Right lobe of liver (tissue), 6 donors: ENCODE measurements at regions of chr11 and their contacts with region 1.

Region 1: DNA sequence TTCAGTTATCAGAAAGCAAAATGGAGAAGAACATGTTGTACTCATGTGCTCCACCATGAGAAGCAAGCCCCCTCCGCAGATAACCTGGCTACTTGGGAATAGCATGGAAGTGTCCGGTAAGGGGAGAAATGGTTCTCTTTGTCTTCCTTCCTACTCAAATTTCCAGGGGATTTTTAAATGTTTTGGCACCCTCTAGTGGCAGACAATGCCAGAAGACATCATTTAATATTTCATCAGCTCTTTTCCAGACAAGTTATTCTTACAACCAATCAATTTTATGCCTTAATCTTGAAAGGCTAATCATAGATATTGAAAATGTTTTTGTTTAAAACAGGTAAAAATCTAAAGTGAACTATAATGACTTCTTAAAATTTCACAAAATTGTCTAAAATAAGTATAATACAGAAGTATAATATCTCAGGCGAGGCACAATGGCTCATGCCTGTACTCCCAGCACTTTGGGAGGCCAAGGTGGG is 15.7 kb downstream of the CRTAM start:
- DNase-seq: no peak
- ATAC-seq: peak; percentile 71 to 80 (median 74)
- H3K4me3 ChIP-seq: no peak overlapping the region
- H3K27ac ChIP-seq: no peak overlapping the region
- H3K4me1 ChIP-seq: no peaks in the 10 kb centered on the region
- H3K27me3 ChIP-seq: no peaks in the 10 kb centered on the region
- CTCF ChIP-seq: peak; percentile 66 to 74 (median 73)
- POLR2A ChIP-seq: no peak

Region 2: GRCh38 chr11:122516686-122517085 is 337.3 kb before region 1 on chr11:
- intact Hi-C with region 1: no loop called
- DNase-seq: no peak
- ATAC-seq: no peak
- H3K4me3 ChIP-seq: no peak overlapping the region
- H3K27ac ChIP-seq: no peak overlapping the region
- H3K4me1 ChIP-seq: no peaks in the 10 kb centered on the region
- H3K27me3 ChIP-seq: no peaks in the 10 kb centered on the region
- CTCF ChIP-seq: no peak
- POLR2A ChIP-seq: no peak

Region 3: GRCh38 chr11:122637541-122637940 is 216.5 kb before region 1 on chr11:
- intact Hi-C with region 1: loop called in 1 of 2 experiments (anchors 5 kb)
- DNase-seq: no peak
- ATAC-seq: no peak
- H3K4me3 ChIP-seq: no peak overlapping the region
- H3K27ac ChIP-seq: no peak overlapping the region
- H3K4me1 ChIP-seq: no peaks in the 10 kb centered on the region
- H3K27me3 ChIP-seq: no peaks in the 10 kb centered on the region
- CTCF ChIP-seq: no peak
- POLR2A ChIP-seq: no peak

Region 4: DNA sequence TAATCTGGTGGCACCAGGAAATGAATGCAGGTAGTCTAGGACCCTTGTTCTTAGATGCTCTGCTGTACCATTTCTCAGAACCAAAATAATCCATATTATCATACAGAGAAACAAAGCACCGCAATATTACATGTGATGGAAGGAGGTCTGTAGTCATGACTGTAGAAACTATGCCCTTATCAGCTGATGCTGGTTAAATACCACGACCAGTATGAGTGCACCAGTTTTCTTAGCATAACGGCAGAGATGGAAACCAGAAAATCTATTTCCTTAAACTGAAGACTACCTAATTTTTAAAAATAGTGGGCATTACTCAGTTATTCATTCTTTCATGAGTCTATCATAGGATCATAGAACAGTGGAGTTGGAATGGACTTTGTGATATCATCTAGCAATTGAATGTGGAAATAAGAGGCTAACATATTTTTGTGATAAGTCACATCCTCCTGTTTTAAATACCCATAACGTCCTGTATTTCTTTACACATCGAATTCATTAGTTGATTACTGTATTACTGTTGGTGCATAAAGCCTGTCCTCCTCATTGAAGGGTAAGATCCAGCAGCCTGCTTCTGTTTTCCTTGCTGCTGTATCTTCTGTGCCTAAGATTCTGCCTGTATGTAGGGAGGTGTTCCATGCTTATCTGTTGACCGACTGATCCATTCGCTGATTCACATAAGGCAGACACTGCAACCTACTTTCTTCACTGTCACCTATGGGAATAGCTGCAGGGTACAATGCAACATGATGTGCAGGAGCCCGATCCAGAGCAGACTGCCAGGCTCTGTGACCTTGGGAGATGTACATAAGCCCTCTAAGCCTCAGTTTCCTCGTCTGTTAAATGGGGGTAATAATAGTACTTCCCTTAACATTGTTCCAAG is 43.8 kb after region 1 on chr11:
- intact Hi-C with region 1: no loop called
- DNase-seq: no peak
- ATAC-seq: no peak
- H3K4me3 ChIP-seq: no peak overlapping the region
- H3K27ac ChIP-seq: no peak overlapping the region
- H3K4me1 ChIP-seq: no peaks in the 10 kb centered on the region
- H3K27me3 ChIP-seq: peaks cover 0 to 5% of the 10 kb centered on the region in 2 donors
- CTCF ChIP-seq: no peak
- POLR2A ChIP-seq: no peak